ENCODE measurements at regions of chrX and their contacts with region 1.

Region 1: DNA sequence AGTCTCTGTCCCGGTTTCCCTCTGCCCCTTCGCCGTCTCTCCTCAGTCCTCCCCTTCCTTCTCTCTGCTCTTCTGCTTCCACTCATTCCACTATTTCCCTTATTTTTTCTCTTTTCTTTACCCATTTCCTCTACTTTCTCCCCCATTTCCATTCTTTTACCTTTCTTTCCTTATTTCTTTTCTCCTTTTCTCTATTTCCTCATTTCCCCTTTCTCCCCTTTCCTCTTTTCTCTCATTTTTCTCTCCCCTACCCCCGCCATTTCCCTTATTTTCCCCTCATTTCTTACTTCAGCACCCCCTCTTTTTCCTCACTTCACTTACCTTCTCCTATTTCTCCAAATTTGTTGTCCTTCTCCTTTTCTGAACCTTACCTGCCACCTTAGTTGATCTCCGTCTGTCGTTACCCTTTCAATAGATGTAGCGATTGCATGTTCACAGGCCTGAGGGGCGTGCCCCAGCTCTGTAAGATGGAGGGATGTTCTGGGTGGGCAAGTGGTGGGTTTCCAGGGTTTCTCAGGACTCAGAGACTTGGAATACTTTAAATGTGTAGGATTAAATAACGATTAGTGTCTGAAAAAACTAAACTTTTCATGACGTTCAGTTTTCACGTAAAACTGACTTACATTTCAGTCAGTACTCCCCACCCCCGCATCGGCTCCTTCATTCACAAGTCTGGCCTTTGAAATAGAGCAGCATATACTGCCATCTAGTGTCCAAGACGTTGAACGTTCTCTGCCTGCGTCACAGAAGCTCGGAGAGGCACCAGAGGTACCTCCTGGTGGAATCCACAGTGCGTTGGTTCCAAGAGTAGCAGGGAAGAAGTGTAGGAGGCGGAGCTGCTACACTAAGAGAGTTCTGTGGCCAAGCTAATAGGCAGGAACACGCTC is 641 bp upstream of the NCBP2L start:
- DNase-seq: peak; percentile 84
- H3K4me3 Mint-ChIP-seq: peak overlapping the region; percentile 86
- H3K27ac Mint-ChIP-seq: no peak overlapping the region
- H3K4me1 Mint-ChIP-seq: peaks cover 7% of the 10 kb centered on the region
- H3K27me3 Mint-ChIP-seq: no peaks in the 10 kb centered on the region

Region 2: DNA sequence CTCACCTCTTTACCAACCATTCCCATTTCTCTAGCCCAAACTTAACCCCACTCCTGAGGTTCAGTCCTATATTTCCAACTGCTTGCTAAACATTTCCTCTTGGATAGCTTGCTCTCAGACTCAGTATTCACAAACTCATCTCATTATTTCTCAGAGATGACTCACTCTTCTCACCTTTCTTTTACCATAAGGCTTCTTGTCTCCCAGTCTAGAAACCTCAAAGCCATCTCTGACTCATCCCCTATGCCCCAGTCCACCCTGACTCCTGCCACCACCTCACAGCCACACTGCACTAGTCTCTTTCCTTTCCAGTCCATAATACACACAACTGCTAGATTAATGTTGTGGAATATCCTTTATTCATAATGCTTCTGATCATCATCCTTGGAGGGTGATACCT is 322.6 kb before region 1 on chrX:
- CTCF ChIA-PET with region 1: no interaction called
- POLR2A ChIA-PET with region 1: no interaction called
- intact Hi-C with region 1: loop called (anchors 2 kb)
- DNase-seq: peak; percentile 58
- H3K4me3 Mint-ChIP-seq: no peak overlapping the region
- H3K27ac Mint-ChIP-seq: no peak overlapping the region
- H3K4me1 Mint-ChIP-seq: peaks cover 11% of the 10 kb centered on the region
- H3K27me3 Mint-ChIP-seq: peaks cover 38% of the 10 kb centered on the region

Region 3: GRCh38 chrX:107654872-107655761 is 121.8 kb before region 1 on chrX:
- CTCF ChIA-PET with region 1: interaction called, 194 read pairs
- POLR2A ChIA-PET with region 1: no interaction called
- intact Hi-C with region 1: loop called (anchors 1 kb)
- DNase-seq: peak; percentile 73
- H3K4me3 Mint-ChIP-seq: no peak overlapping the region
- H3K27ac Mint-ChIP-seq: no peak overlapping the region
- H3K4me1 Mint-ChIP-seq: peaks cover 13% of the 10 kb centered on the region
- H3K27me3 Mint-ChIP-seq: no peaks in the 10 kb centered on the region

Region 4: GRCh38 chrX:107716816-107717700 is 59.8 kb before region 1 on chrX:
- CTCF ChIA-PET with region 1: interaction called, 56 read pairs
- POLR2A ChIA-PET with region 1: interaction called, 4 read pairs
- intact Hi-C with region 1: loop called (anchors 1 kb)
- DNase-seq: peak; percentile 91
- H3K4me3 Mint-ChIP-seq: peak overlapping the region; percentile 89
- H3K27ac Mint-ChIP-seq: peak overlapping the region; percentile 90
- H3K4me1 Mint-ChIP-seq: peaks cover 44% of the 10 kb centered on the region
- H3K27me3 Mint-ChIP-seq: no peaks in the 10 kb centered on the region

Region 5: GRCh38 chrX:107826238-107827029 is 49.5 kb after region 1 on chrX:
- CTCF ChIA-PET with region 1: no interaction called
- POLR2A ChIA-PET with region 1: no interaction called
- intact Hi-C with region 1: loop called (anchors 5 kb)
- DNase-seq: peak; percentile 38
- H3K4me3 Mint-ChIP-seq: peak overlapping the region; percentile 74
- H3K27ac Mint-ChIP-seq: peak overlapping the region; percentile 71
- H3K4me1 Mint-ChIP-seq: peaks cover 43% of the 10 kb centered on the region
- H3K27me3 Mint-ChIP-seq: no peaks in the 10 kb centered on the region

Region 6: GRCh38 chrX:108914791-108915190 is 1137.9 kb after region 1 on chrX:
- CTCF ChIA-PET with region 1: no interaction called
- POLR2A ChIA-PET with region 1: no interaction called
- intact Hi-C with region 1: no loop called
- DNase-seq: no peak
- H3K4me3 Mint-ChIP-seq: no peak overlapping the region
- H3K27ac Mint-ChIP-seq: no peak overlapping the region
- H3K4me1 Mint-ChIP-seq: no peaks in the 10 kb centered on the region
- H3K27me3 Mint-ChIP-seq: no peaks in the 10 kb centered on the region

Measured in activated CD4-positive, alpha-beta memory T cell treated with anti-CD3 and anti-CD28 coated beads for 36 hours (primary cell).